ENCODE measurements at regions of chr7 and their contacts with region 1.

Region 1: DNA sequence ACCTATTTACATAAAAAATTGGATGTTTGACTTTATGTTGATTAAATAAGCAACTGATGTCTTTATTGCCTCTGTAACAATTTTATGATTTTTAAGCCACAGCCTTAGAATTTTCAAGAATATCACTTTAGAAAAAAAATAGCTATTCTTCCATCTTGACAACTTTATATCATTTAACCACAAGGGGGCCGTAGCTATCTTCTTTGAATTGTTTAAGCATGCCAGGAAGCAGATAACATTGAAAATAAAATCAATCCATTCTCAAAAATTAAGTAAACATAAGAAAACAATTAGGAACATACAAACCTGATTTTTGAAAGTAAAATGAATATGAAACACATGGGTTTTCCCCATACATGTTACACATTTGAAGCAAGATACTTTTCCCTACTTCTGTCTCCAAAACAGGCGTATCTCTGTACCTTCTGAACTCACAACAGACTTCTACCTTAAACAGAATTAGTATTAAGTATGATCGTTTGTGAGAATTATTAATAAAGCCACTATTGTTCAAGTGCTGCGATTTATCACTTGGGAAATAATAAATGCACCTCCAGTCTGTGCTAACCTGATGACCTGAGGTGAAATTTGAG is 209.0 kb downstream of the CACNA2D1 start:
- H3K4me3 Mint-ChIP-seq: no peak overlapping the region
- H3K27ac Mint-ChIP-seq: no peak overlapping the region
- H3K4me1 Mint-ChIP-seq: no peaks in the 10 kb centered on the region
- H3K27me3 Mint-ChIP-seq: no peaks in the 10 kb centered on the region

Region 2: GRCh38 chr7:81676813-81677212 is 557.7 kb before region 1 on chr7:
- intact Hi-C with region 1: no loop called
- H3K4me3 Mint-ChIP-seq: no peak overlapping the region
- H3K27ac Mint-ChIP-seq: no peak overlapping the region
- H3K4me1 Mint-ChIP-seq: peaks cover 21% of the 10 kb centered on the region
- H3K27me3 Mint-ChIP-seq: no peaks in the 10 kb centered on the region

Region 3: GRCh38 chr7:82044497-82045080 is 190.0 kb before region 1 on chr7:
- intact Hi-C with region 1: loop called (anchors 10 kb)
- H3K4me3 Mint-ChIP-seq: no peak overlapping the region
- H3K27ac Mint-ChIP-seq: no peak overlapping the region
- H3K4me1 Mint-ChIP-seq: no peaks in the 10 kb centered on the region
- H3K27me3 Mint-ChIP-seq: no peaks in the 10 kb centered on the region

Region 4: DNA sequence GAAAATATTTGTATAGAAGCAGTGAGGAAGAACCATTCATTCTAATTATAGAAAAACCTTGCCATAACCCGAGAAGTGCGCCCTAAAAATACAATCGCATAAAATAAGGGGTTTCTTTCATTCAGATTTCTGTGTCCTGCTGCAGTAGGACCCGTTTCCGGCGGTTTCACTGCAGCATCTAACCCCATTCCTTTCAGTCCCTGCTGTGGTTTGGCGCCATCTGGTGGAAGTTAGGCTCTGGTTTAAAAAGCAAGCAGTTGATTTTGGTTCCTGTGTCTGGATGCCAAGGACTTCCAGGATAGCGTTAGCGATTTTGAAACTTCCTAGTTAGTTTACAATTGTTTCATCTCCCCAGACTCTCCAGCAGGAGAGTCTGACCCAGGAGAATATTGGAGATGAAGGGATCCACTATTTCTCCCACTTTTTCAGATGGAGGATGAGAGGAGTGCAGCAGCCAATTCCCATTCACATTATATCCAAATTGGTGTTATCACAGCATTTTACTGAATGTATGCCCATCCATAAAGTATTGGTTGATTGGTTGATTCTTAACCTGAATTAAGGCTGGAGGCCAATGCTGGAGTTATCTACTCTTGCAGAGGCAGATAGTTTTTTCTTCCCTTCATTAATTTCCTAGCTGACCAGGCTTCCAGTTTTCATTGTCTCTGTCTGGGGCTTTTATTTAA is 337.8 kb after region 1 on chr7:
- intact Hi-C with region 1: loop called (anchors 1 kb)
- H3K4me3 Mint-ChIP-seq: no peak overlapping the region
- H3K27ac Mint-ChIP-seq: no peak overlapping the region
- H3K4me1 Mint-ChIP-seq: no peaks in the 10 kb centered on the region
- H3K27me3 Mint-ChIP-seq: peaks cover 4% of the 10 kb centered on the region

Region 5: DNA sequence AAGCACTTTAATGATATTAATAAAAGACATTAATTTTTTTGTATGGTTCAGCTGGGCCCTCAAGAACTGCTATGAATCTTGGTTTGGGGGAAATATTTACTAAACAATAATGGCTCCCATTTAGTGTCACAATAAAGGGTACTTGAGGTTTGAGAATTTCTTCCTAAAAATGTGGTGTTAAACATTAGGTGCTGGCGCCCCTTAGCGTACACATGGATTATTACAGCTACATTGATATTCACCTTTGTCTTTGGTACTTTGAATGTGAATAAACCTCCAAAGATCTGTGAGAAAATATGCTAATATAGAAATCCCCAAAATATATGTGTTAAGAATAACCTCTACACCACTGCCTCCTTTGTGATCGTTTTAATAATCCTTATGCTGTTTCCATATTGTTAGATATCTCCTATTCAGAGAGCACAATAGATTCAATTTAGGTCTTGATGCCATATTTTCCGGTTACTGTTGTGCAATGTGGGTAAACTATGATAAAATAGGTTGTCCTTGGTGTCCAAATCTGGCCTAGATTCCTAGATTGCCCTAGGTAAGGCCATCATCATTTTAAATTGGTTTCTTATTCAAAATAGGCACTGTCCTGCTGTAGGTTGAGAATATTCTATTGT is 370.8 kb after region 1 on chr7:
- intact Hi-C with region 1: loop called (anchors 10 kb)
- H3K4me3 Mint-ChIP-seq: no peak overlapping the region
- H3K27ac Mint-ChIP-seq: no peak overlapping the region
- H3K4me1 Mint-ChIP-seq: no peaks in the 10 kb centered on the region
- H3K27me3 Mint-ChIP-seq: no peaks in the 10 kb centered on the region